AG04449 (cell line): ENCODE measurements at regions of chr3 and their contacts with region 1.

Region 1: GRCh38 chr3:169133178-169134161 is 530.0 kb downstream of the MECOM start:
- DNase-seq: no peak
- H3K4me3 ChIP-seq: no peak overlapping the region
- CTCF ChIP-seq: no peak

Region 2: DNA sequence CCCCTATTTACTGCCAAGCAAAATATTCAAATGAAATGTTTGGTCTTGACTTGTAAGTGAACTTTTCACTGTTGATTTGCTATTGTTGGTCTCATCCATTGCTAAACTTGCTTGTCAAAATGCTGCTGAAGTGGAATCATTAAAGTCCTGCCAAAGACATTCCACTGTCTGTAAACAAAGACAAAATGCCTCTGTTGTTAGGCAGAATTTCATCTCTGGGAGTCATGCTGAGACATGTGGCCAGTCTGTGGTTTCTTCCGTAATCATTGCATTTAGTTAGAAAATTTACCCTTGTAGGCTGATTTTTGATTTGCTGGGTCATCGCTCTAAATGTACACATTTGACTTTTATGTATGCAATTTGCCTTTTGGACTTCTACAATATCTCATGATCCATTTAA is 47.6 kb before region 1 on chr3:
- CTCF ChIA-PET with region 1: no interaction called
- POLR2A ChIA-PET with region 1: no interaction called
- DNase-seq: peak; percentile 88
- H3K4me3 ChIP-seq: no peak overlapping the region
- CTCF ChIP-seq: no peak

Region 3: GRCh38 chr3:169143506-169143905 is 10.0 kb after region 1 on chr3:
- CTCF ChIA-PET with region 1: interaction called, 25 read pairs
- POLR2A ChIA-PET with region 1: no interaction called
- DNase-seq: no peak
- H3K4me3 ChIP-seq: no peak overlapping the region
- CTCF ChIP-seq: no peak

Region 4: DNA sequence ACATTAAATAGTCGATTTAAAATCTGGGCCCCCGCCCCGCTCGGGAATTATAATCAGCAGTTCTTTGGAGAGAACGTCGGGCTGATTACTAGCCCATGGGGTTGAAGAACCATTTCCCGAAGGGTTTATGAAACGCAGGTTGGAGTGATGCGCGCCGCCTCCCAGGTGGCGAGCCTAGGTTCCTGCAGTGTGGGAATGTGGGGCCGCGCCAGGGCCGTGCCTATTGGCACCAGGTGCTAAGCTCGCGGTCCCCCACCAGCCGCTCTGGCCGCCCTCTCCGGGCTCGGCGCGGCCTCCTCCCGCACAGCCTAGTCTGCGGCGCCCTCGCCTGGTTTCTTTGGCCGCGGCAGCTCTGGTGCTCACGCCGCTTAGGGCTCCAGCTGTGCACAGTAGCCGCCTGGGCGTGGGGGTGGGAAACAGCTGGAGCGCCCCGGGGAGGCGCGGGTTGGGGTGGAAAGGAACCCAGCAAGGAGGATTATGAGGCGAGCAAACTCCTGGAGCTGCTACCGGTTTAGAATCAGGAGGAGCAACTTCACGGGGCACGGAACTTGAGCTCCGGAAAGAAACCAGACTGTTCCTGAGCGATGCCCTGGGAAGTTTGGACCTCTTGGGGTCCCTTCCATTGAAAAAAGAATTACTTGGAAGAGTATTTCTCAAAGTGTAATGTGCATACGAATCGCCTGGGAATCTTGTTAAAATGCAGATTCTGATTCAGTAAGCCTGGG is 535.6 kb after region 1 on chr3:
- CTCF ChIA-PET with region 1: interaction called, 21 read pairs
- POLR2A ChIA-PET with region 1: no interaction called
- DNase-seq: no peak
- H3K4me3 ChIP-seq: peak overlapping the region; percentile 27
- CTCF ChIP-seq: peak; percentile 82